CD4-positive, alpha-beta T cell (primary cell): ENCODE measurements at regions of chr4 and their contacts with region 1.

Region 1: DNA sequence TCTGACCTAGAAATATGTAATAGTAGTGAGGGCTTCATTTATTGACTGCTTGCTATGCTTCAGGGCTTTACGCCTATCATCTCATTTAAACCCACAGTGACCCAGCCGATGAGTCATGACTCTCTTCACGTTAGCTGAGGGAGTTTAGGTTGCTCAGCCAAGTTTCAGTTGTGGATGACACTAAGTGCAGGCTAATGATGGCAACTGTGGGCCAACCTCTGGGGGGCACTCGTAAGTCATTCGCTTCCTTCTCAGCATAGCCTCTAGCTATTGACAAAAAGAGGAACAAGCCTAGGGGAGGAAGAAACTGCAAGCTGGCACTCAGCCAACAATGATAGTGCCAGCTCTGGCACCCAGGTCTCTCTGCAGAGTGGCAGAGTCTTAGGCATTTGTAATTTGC is 325.0 kb downstream of the ARHGAP10 start:
- DNase-seq: peak; percentile 14 to 82 (median 33)
- ATAC-seq: peak; percentile 24
- H3K4me3 ChIP-seq: no peak overlapping the region
- H3K4me3 Mint-ChIP-seq: peak overlapping the region; percentile 5
- H3K27ac ChIP-seq: peak overlapping the region in 1 of 2 donors; percentile 8
- H3K27ac Mint-ChIP-seq: peak overlapping the region; percentile 91
- H3K4me1 ChIP-seq: peaks cover 80% of the 10 kb centered on the region
- H3K4me1 Mint-ChIP-seq: peaks cover 94% of the 10 kb centered on the region
- H3K27me3 ChIP-seq: no peaks in the 10 kb centered on the region
- H3K27me3 Mint-ChIP-seq: no peaks in the 10 kb centered on the region
- CTCF ChIP-seq: peak; percentile 21

Region 2: GRCh38 chr4:146699910-146700309 is 1357.0 kb before region 1 on chr4:
- CTCF ChIA-PET with region 1: no interaction called
- POLR2A ChIA-PET with region 1: no interaction called
- intact Hi-C with region 1: no loop called
- DNase-seq: no peak
- ATAC-seq: no peak
- H3K4me3 ChIP-seq: no peak overlapping the region
- H3K4me3 Mint-ChIP-seq: no peak overlapping the region
- H3K27ac ChIP-seq: no peak overlapping the region
- H3K27ac Mint-ChIP-seq: no peak overlapping the region
- H3K4me1 ChIP-seq: no peaks in the 10 kb centered on the region
- H3K4me1 Mint-ChIP-seq: no peaks in the 10 kb centered on the region
- H3K27me3 ChIP-seq: no peaks in the 10 kb centered on the region
- H3K27me3 Mint-ChIP-seq: no peaks in the 10 kb centered on the region
- CTCF ChIP-seq: no peak

Region 3: DNA sequence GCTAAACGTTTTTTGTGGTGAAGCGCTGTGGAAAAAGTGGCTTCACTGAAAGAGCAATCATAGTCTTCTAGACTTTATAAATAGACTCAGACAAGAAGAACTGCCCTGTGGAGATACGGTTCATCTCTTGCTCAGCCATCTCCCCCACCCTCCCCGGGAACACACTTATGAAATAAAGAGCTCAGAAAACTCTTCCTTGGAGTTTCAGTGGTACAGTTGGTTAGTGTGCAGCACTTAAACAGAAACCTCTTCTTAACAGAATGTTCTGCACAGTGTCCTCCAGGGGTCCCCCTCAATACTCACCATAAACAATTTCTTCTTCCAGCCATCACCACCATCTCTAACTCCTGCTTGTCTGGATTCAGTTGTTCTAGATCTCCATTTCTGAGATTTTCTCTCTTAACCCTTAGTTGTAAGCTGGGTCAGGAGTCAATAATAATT is 11.9 kb before region 1 on chr4:
- CTCF ChIA-PET with region 1: no interaction called
- POLR2A ChIA-PET with region 1: interaction called, 12 read pairs
- intact Hi-C with region 1: no loop called
- DNase-seq: peak in 3 of 14 experiments; percentile 47 to 55 (median 52)
- ATAC-seq: peak; percentile 46
- H3K4me3 ChIP-seq: no peak overlapping the region
- H3K4me3 Mint-ChIP-seq: no peak overlapping the region
- H3K27ac ChIP-seq: no peak overlapping the region
- H3K27ac Mint-ChIP-seq: no peak overlapping the region
- H3K4me1 ChIP-seq: peaks cover 5% of the 10 kb centered on the region
- H3K4me1 Mint-ChIP-seq: peaks cover 27% of the 10 kb centered on the region
- H3K27me3 ChIP-seq: no peaks in the 10 kb centered on the region
- H3K27me3 Mint-ChIP-seq: no peaks in the 10 kb centered on the region
- CTCF ChIP-seq: peak; percentile 41